Panc1 (cell line): ENCODE measurements at regions of chr3 and their contacts with region 1.

Region 1: DNA sequence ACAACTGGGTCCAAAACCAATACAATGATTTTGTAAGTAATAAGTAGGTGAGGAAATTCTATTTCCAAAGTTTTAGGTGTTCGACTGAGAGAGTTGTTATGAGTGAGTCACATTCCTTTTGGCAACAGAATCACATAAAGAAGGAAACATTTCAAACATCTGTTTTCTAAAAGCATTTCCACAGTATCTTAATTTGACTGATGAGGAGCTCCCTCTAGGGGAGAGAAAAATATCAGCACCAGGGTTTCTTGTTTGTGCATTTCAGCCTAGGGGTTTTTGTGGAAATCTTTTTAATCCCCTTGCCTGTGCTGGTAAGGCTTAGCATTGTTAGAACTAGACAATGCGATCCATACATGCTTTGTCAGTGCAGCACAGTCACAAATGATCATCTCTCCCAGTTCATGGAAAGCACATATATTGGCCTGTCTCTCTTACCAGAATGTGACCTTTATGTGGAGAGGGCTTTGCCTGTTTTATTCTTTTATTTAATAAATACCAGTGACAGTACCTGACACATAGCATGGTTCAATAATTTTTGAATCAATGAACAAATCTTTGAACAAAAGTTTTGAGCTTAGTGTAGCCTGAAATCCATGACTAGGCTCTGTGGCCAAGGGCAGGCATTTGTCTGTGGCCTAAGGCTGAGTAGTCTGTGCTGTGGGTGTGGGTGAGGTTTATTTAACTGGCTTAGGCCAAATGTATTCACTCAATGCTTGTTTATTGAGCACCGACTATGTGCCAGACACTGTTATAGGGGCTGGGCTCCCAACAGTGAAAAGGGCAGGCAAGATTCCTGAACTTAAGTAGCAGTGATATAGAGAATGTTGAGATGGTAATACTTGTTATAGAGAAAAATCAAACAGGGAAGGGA is 21.1 kb upstream of the IQCF6 start:
- DNase-seq: peak; percentile 22
- ATAC-seq: 0 out of 2 replicates have a peak, but pooled peaks have one; percentile 58
- H3K4me3 ChIP-seq: no peak overlapping the region
- H3K27ac ChIP-seq: no peak overlapping the region
- H3K4me1 ChIP-seq: no peaks in the 10 kb centered on the region
- H3K27me3 ChIP-seq: peaks cover 3% of the 10 kb centered on the region
- CTCF ChIP-seq: peak; percentile 79

Region 2: GRCh38 chr3:50714946-50715345 is 1085.2 kb before region 1 on chr3:
- CTCF ChIA-PET with region 1: no interaction called
- POLR2A ChIA-PET with region 1: no interaction called
- in situ Hi-C with region 1: no loop called
- intact Hi-C with region 1: no loop called
- DNase-seq: no peak
- ATAC-seq: no peak
- H3K4me3 ChIP-seq: no peak overlapping the region
- H3K27ac ChIP-seq: no peak overlapping the region
- H3K4me1 ChIP-seq: no peaks in the 10 kb centered on the region
- H3K27me3 ChIP-seq: no peaks in the 10 kb centered on the region
- CTCF ChIP-seq: no peak

Region 3: GRCh38 chr3:51718547-51719409 is 81.3 kb before region 1 on chr3:
- CTCF ChIA-PET with region 1: interaction called, 3 read pairs
- POLR2A ChIA-PET with region 1: no interaction called
- in situ Hi-C with region 1: no loop called
- intact Hi-C with region 1: loop called (anchors 5 kb)
- DNase-seq: peak; percentile 27
- ATAC-seq: peak; percentile 93
- H3K4me3 ChIP-seq: no peak overlapping the region
- H3K27ac ChIP-seq: no peak overlapping the region
- H3K4me1 ChIP-seq: no peaks in the 10 kb centered on the region
- H3K27me3 ChIP-seq: no peaks in the 10 kb centered on the region
- CTCF ChIP-seq: peak; percentile 86

Region 4: DNA sequence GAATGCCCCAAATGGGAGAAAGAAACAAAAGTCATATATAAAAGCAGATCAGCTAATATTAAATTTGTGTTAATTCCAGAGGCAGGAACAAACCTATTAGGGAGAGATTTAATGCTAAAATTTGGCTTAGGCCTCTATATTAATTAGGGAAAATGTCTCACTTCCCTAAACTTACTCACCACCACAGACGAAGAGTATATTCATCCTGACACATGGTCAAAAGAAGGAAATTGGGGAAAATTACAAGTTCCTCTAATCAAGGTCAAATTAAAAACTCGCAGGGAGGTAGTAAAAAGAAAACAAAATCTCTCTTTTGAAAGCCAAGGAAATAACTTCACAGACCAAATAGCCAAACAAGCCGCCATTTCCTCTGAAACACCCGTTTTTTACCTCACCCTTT is 61.0 kb before region 1 on chr3:
- CTCF ChIA-PET with region 1: no interaction called
- POLR2A ChIA-PET with region 1: no interaction called
- in situ Hi-C with region 1: no loop called
- intact Hi-C with region 1: no loop called
- DNase-seq: no peak
- ATAC-seq: no peak
- H3K4me3 ChIP-seq: no peak overlapping the region
- H3K27ac ChIP-seq: no peak overlapping the region
- H3K4me1 ChIP-seq: no peaks in the 10 kb centered on the region
- H3K27me3 ChIP-seq: peaks cover 4% of the 10 kb centered on the region; the same call in 1 of the 2 replicates
- CTCF ChIP-seq: no peak

Region 5: DNA sequence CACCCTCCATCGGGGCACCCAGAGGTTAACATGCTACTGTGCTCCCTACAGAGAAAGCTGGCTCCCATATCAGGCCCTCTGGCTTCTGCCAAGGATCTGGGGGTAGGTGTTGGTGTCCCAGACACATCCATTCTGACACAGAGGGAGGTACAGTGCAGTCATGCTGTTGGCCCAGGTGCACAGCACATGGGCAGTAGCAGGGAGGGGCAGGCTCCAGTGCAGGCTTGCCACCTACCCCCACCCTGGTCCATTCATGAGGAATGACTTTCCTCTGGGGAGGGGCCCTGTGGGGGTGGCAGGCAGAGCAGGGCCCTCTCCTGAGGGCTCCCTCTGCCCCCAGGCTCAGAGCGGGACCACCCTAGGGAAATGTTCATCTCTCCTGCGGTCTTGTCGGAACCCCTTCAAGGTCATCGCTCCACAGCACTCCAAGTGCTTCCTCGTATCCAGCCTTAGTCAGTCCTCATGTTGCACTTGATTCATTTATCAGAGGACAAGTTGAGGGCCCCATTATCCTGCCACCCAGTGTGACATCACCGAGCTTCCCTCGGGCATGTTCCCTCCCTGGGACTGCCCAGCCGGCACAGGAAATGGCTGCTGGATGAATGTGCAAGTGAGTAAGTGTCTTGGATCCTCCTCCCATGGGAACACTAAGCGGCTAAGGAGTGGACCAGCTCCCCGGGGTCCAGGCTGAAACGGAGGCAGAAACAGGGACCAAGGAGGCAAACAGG is 246.2 kb after region 1 on chr3:
- CTCF ChIA-PET with region 1: interaction called, 10 read pairs
- POLR2A ChIA-PET with region 1: no interaction called
- in situ Hi-C with region 1: no loop called
- intact Hi-C with region 1: no loop called
- DNase-seq: no peak
- ATAC-seq: peak; percentile 87
- H3K4me3 ChIP-seq: no peak overlapping the region
- H3K27ac ChIP-seq: peak overlapping the region; percentile 61
- H3K4me1 ChIP-seq: peaks cover 21% of the 10 kb centered on the region
- H3K27me3 ChIP-seq: no peaks in the 10 kb centered on the region
- CTCF ChIP-seq: no peak